ENCODE measurements at regions of chr19 and their contacts with region 1.

Region 1: DNA sequence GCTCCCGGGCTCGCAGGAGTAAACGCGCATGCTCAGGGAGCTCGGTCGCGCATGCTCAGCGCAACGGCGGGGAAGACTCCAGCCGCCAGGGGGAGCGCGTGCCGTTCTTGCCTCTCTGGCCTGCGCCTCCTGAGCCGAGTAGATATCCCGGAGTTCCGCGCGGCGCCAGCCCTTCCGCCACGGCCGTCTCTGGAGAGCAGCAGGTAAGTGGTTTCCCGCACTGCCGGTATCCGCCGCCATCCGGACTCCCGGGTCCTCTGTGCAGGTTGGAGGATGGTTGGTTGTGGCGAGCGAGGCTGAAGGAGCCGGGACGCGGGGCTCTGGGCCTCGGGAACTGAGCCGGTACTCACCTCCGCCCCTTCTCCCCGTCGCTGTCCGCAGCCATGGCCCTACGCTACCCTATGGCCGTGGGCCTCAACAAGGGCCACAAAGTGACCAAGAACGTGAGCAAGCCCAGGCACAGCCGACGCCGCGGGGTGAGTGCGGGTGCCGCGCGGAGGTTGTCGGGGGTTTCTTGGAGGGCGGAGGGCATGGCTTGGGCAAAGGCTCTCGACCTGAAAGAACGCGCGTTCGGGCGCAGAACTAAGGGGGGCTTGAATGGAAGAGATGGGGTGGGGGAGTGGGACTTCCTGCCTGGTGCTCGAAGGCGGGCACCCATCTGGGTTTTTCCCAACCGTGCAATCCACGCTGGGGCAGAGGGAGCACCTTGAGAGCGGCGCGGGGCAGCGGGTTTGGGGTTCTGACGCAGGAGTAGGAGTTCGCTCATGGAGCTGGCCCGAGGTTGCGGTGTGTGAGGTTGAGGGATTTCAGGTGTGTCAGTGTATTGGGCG is at the start of gene RPL36:
- DNase-seq: peak; percentile 92
- ATAC-seq: peak; percentile 56
- H3K4me3 ChIP-seq: peak within 1 kb of the TSS; percentile 88 to 94 (median 89)
- H3K27ac ChIP-seq: peak within 1 kb of the TSS; percentile 92
- H3K4me1 ChIP-seq: peaks cover 34% of the 10 kb centered on the region
- H3K27me3 ChIP-seq: no peaks in the 10 kb centered on the region; a peak in 1 of 5 replicates
- CTCF ChIP-seq: peak; percentile 98
- EP300 ChIP-seq: no peak
- POLR2A ChIP-seq: peak; percentile 99
- RAD21 ChIP-seq: peak; percentile 64; the same call in 1 of the 2 replicates
- total RNA-seq, gene RPL36: 706 and 763 TPM in 2 replicates

Region 2: DNA sequence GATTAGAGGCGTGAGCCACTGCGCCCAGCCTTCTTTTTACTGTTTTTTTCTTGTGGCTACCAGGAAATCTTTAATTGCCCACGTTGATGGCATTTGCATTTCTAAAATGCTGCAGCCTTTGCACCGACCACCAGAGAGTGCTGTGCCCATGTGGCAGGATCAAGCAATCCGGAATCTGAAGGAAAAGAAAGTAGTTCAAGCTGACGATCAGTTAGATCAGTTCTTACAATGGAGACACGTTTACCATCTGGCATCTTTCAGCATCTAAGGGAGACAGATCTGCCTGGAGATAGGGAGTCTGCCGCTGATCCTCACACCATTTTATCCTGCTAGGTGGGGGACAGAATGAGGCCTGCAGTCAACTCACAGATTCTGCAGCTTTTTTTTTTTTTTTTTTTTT is 142.5 kb before region 1 on chr19:
- CTCF ChIA-PET with region 1: no interaction called
- POLR2A ChIA-PET with region 1: no interaction called
- in situ Hi-C with region 1: no loop called
- intact Hi-C with region 1: loop called (anchors 5 kb)
- DNase-seq: peak; percentile 38
- ATAC-seq: peak; percentile 71
- H3K4me3 ChIP-seq: no peak overlapping the region
- H3K27ac ChIP-seq: no peak overlapping the region
- H3K4me1 ChIP-seq: no peaks in the 10 kb centered on the region
- H3K27me3 ChIP-seq: peaks cover 0 to 9% of the 10 kb centered on the region in 2 experiments; a peak in 2 of 5 replicates
- CTCF ChIP-seq: peak; percentile 83
- EP300 ChIP-seq: no peak
- POLR2A ChIP-seq: no peak
- RAD21 ChIP-seq: peak; percentile 51; the same call in 1 of the 2 replicates

Region 3: GRCh38 chr19:5661451-5661873 is 28.9 kb before region 1 on chr19:
- CTCF ChIA-PET with region 1: no interaction called
- POLR2A ChIA-PET with region 1: no interaction called
- in situ Hi-C with region 1: no loop called
- intact Hi-C with region 1: no loop called
- DNase-seq: no peak
- ATAC-seq: no peak
- H3K4me3 ChIP-seq: no peak overlapping the region
- H3K27ac ChIP-seq: no peak overlapping the region
- H3K4me1 ChIP-seq: peaks cover 15% of the 10 kb centered on the region
- H3K27me3 ChIP-seq: no peaks in the 10 kb centered on the region
- CTCF ChIP-seq: no peak
- EP300 ChIP-seq: no peak
- POLR2A ChIP-seq: no peak
- RAD21 ChIP-seq: no peak

Region 4: DNA sequence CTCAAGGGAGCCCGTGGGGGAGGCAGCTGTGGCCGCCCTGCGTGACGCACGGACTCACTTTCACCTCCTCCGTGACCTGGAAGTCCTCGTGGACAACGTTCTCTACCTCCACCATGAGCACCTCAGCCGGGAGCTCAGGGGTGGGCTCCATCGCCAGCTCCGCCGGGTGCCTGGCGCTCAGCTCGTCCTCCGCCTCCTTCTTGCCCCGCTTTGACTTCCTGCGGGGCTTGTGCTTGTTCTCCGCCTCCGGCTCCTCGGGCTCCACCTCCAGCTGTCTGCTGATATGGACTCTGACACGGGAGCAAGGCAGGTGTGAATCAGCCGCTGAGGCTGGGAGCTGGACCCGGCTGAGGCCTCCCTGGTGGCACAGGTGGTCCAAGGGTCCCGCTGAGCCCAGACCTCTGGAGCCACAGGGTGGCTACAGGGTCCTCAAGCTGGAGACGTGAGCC is 21.4 kb after region 1 on chr19:
- CTCF ChIA-PET with region 1: no interaction called
- POLR2A ChIA-PET with region 1: interaction called, 13 read pairs
- in situ Hi-C with region 1: no loop called
- intact Hi-C with region 1: no loop called
- DNase-seq: no peak
- ATAC-seq: no peak
- H3K4me3 ChIP-seq: no peak overlapping the region
- H3K27ac ChIP-seq: no peak overlapping the region
- H3K4me1 ChIP-seq: peaks cover 19% of the 10 kb centered on the region
- H3K27me3 ChIP-seq: no peaks in the 10 kb centered on the region
- CTCF ChIP-seq: no peak
- EP300 ChIP-seq: no peak
- POLR2A ChIP-seq: no peak
- RAD21 ChIP-seq: no peak

Region 5: GRCh38 chr19:5719961-5720790 is 29.8 kb after region 1 on chr19 and contains the starts of genes CATSPERD and LONP1:
- CTCF ChIA-PET with region 1: interaction called, 3 read pairs
- POLR2A ChIA-PET with region 1: interaction called, 95 read pairs
- in situ Hi-C with region 1: no loop called
- intact Hi-C with region 1: loop called (anchors 2 kb)
- DNase-seq: peak; percentile 96
- ATAC-seq: peak; percentile 90
- H3K4me3 ChIP-seq: peak within 1 kb of the TSS; percentile 78 to 99 (median 98)
- H3K27ac ChIP-seq: peak within 1 kb of the TSS; percentile 95
- H3K4me1 ChIP-seq: peaks cover 24% of the 10 kb centered on the region
- H3K27me3 ChIP-seq: no peaks in the 10 kb centered on the region; a peak in 1 of 5 replicates
- CTCF ChIP-seq: peak; percentile 97
- EP300 ChIP-seq: no peak
- POLR2A ChIP-seq: peak; percentile 88 to 93
- RAD21 ChIP-seq: peak; percentile 62; the same call in 1 of the 2 replicates
- total RNA-seq, gene CATSPERD: not detected in 2 replicates
- total RNA-seq, gene LONP1: 50.4 and 76.8 TPM in 2 replicates

Region 6: DNA sequence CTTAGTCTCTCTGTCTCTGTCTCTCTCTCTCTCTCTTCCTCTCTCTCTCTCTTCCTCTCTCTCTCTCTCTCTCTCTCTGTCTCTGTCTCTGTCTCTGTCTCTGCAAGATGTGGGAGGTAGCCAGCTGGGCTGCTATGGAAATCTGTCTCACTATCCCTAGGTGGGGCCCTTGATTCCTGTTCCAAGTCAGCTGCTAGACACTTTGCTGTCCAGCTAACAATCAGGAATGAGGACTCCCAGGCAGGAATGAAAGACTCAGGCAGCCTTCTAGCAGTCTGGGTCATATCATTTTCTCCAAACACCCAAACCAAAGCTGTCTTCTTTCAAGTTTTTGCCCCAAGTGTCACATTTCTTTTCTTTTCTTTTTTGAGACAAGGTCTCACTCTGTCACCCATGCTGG is 53.3 kb after region 1 on chr19:
- CTCF ChIA-PET with region 1: no interaction called
- POLR2A ChIA-PET with region 1: no interaction called
- in situ Hi-C with region 1: no loop called
- intact Hi-C with region 1: no loop called
- DNase-seq: no peak
- ATAC-seq: no peak
- H3K4me3 ChIP-seq: no peak overlapping the region
- H3K27ac ChIP-seq: no peak overlapping the region
- H3K4me1 ChIP-seq: peaks cover 19% of the 10 kb centered on the region
- H3K27me3 ChIP-seq: peaks cover under 1 to 8% of the 10 kb centered on the region in 2 experiments; a peak in 1 of 5 replicates
- CTCF ChIP-seq: no peak; the same call in 1 of the 2 replicates
- EP300 ChIP-seq: no peak
- POLR2A ChIP-seq: no peak
- RAD21 ChIP-seq: no peak

Region 7: DNA sequence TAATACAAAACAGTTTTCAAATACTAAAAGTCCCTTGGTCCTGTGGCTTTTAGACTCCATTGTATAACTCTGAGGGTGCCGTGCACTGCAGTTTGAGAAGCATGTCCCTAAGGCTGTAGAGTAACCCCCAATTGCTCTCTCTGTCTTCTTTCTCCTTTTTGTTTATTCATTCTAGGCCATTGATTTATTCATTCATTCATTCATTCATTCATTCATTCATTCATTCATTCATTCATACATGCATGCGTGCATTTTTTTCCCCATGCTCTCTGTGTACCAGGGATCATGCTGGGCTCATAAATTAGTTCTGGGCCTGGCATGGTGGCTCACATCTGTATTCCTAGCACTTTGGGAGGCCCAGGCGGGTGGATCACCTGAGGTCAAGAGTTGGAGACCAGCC is 74.9 kb after region 1 on chr19:
- CTCF ChIA-PET with region 1: no interaction called
- POLR2A ChIA-PET with region 1: no interaction called
- in situ Hi-C with region 1: no loop called
- intact Hi-C with region 1: no loop called
- DNase-seq: no peak
- ATAC-seq: no peak
- H3K4me3 ChIP-seq: no peak overlapping the region
- H3K27ac ChIP-seq: no peak overlapping the region
- H3K4me1 ChIP-seq: peaks cover 5% of the 10 kb centered on the region; the same call in 1 of the 2 replicates
- H3K27me3 ChIP-seq: no peaks in the 10 kb centered on the region; a peak in 1 of 5 replicates
- CTCF ChIP-seq: no peak
- EP300 ChIP-seq: no peak
- POLR2A ChIP-seq: no peak
- RAD21 ChIP-seq: no peak

Measured in HepG2 (cell line).